B cell (primary cell): ENCODE measurements at regions of chr16 and their contacts with region 1.

Region 1: GRCh38 chr16:58160855-58161254 is 31.7 kb upstream of the CFAP20 start:
- DNase-seq: no peak
- ATAC-seq: no peak
- H3K4me3 ChIP-seq: no peak overlapping the region
- H3K4me3 Mint-ChIP-seq: no peak overlapping the region
- H3K27ac ChIP-seq: no peak overlapping the region
- H3K27ac Mint-ChIP-seq: no peak overlapping the region
- H3K4me1 ChIP-seq: no peaks in the 10 kb centered on the region
- H3K4me1 Mint-ChIP-seq: no peaks in the 10 kb centered on the region
- H3K27me3 ChIP-seq: no peaks in the 10 kb centered on the region
- H3K27me3 Mint-ChIP-seq: no peaks in the 10 kb centered on the region
- CTCF ChIP-seq: no peak

Region 2: DNA sequence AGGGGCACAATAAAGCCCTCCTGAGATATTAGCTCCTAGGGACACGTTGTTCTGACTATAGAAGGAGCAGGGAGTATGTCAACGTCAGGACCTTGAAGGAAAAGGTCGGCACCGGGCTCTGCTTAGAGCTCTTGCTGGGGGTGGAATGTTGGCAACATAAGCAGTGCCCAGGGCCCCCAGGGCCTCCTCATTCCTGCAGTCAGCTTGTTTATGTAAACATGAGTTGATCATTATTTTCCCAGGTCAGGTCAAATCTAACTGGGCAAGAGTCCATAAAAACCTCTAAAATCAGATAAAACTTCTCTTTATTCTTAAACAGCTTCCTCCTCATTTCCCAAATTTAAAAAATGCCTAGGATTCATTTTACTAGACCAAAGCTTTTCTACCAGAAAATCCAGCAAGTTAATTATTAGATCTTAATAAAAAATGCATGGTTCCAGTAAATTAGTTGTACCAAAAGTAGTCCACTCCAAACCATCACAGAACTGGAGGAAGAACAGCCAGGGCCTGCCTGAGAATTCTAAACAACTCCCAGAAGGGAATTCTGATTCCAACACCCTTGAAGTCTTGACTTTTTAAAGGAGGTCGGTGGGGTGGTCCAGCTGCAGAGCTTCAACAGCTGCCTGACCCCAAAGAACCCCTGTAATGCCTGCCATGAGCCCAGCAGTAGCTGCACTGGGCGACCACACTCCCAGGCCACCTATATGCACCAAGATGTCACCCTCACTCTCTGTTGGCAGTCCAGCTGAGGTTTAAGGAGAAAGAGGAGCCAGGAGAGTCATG is 1789.8 kb before region 1 on chr16:
- CTCF ChIA-PET with region 1: no interaction called
- POLR2A ChIA-PET with region 1: no interaction called
- intact Hi-C with region 1: loop called (anchors 5 kb)
- DNase-seq: no peak
- ATAC-seq: no peak
- H3K4me3 ChIP-seq: no peak overlapping the region
- H3K4me3 Mint-ChIP-seq: no peak overlapping the region
- H3K27ac ChIP-seq: no peak overlapping the region
- H3K27ac Mint-ChIP-seq: no peak overlapping the region
- H3K4me1 ChIP-seq: no peaks in the 10 kb centered on the region
- H3K4me1 Mint-ChIP-seq: peaks cover 4% of the 10 kb centered on the region
- H3K27me3 ChIP-seq: no peaks in the 10 kb centered on the region
- H3K27me3 Mint-ChIP-seq: no peaks in the 10 kb centered on the region
- CTCF ChIP-seq: no peak

Region 3: DNA sequence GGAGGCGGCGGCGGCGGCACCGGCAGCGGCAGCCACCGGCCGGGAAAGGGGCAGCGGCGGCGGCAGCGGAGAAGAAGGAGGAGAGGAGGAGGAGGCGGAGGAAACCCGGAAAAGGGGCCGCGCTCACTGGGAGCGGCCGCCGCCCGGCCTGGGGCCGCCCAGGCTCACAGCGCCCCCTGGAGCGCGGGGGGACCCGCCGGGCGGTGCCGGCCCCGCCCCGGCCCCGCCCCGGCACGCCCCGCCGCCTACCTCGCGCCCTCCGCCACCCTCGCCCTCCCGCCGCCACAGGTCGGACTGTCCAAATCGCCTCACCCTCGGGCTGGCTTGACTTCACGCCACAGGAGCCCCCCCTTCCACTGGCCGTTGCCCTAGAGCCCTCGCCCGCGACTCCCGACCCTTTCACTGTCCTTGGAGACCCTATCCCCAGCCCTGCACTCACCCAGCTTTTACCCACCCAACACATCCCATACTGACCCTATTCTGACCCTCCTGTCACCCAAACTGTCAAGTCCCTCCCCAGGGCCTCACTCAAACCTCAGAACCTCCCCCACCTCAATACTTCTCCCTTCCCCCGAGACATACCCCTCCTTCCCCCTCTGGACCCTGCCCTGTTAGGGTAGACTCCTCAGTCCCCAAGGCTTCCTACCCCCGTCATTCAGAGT is 37.3 kb after region 1 on chr16 and contains the start of gene CSNK2A2:
- CTCF ChIA-PET with region 1: no interaction called
- POLR2A ChIA-PET with region 1: interaction called, 12 read pairs
- intact Hi-C with region 1: no loop called
- DNase-seq: peak; percentile 82
- ATAC-seq: peak; percentile 93
- H3K4me3 ChIP-seq: peak within 1 kb of the TSS; percentile 44 to 83 (median 64)
- H3K4me3 Mint-ChIP-seq: peak within 1 kb of the TSS; percentile 90
- H3K27ac ChIP-seq: peak within 1 kb of the TSS in 1 of 2 donors; percentile 55
- H3K27ac Mint-ChIP-seq: peak within 1 kb of the TSS; percentile 81
- H3K4me1 ChIP-seq: peaks cover 15 to 18% of the 10 kb centered on the region in 2 donors
- H3K4me1 Mint-ChIP-seq: peaks cover 33% of the 10 kb centered on the region
- H3K27me3 ChIP-seq: peaks cover 0 to 7% (median 2%) of the 10 kb centered on the region in 4 experiments
- H3K27me3 Mint-ChIP-seq: peaks cover 10% of the 10 kb centered on the region
- CTCF ChIP-seq: no peak
- total RNA-seq, gene CSNK2A2: 63.5 and 69.4 TPM in 2 replicates